GM12878 (cell line): ENCODE measurements at regions of chr5 and their contacts with region 1.

Region 1: GRCh38 chr5:157283434-157283833 is 17.5 kb downstream of the CYFIP2 start:
- DNase-seq: peak; percentile 65
- ATAC-seq: peak; percentile 99
- H3K4me3 ChIP-seq: no peak overlapping the region
- H3K27ac ChIP-seq: no peak overlapping the region
- H3K4me1 ChIP-seq: peaks cover 21% of the 10 kb centered on the region
- H3K27me3 ChIP-seq: no peaks in the 10 kb centered on the region
- CTCF ChIP-seq: no peak
- EP300 ChIP-seq: no peak
- POLR2A ChIP-seq: no peak
- RAD21 ChIP-seq: no peak

Region 2: GRCh38 chr5:157265714-157266285 is 17.6 kb before region 1 on chr5 and contains the start of gene CYFIP2:
- CTCF ChIA-PET with region 1: interaction called, 3 read pairs
- POLR2A ChIA-PET with region 1: interaction called, 8 read pairs
- RAD21 ChIA-PET with region 1: interaction called, 10 read pairs
- SMC1A ChIA-PET with region 1: interaction called, 16 read pairs
- in situ Hi-C with region 1: no loop called
- intact Hi-C with region 1: no loop called
- DNase-seq: no peak
- ATAC-seq: peak; percentile 87
- H3K4me3 ChIP-seq: peak within 1 kb of the TSS; percentile 91
- H3K27ac ChIP-seq: peak within 1 kb of the TSS; percentile 83
- H3K4me1 ChIP-seq: peaks cover 37% of the 10 kb centered on the region
- H3K27me3 ChIP-seq: no peaks in the 10 kb centered on the region
- CTCF ChIP-seq: no peak
- EP300 ChIP-seq: no peak
- POLR2A ChIP-seq: peak; percentile 80
- RAD21 ChIP-seq: no peak
- polyA plus RNA-seq, gene CYFIP2: 43.4 to 68.6 TPM

Region 3: GRCh38 chr5:158492841-158493242 is 1209.4 kb after region 1 on chr5:
- CTCF ChIA-PET with region 1: no interaction called
- POLR2A ChIA-PET with region 1: no interaction called
- RAD21 ChIA-PET with region 1: no interaction called
- SMC1A ChIA-PET with region 1: no interaction called
- in situ Hi-C with region 1: no loop called
- intact Hi-C with region 1: loop called (anchors 10 kb)
- DNase-seq: no peak
- ATAC-seq: no peak
- H3K4me3 ChIP-seq: no peak overlapping the region
- H3K27ac ChIP-seq: no peak overlapping the region
- H3K4me1 ChIP-seq: no peaks in the 10 kb centered on the region
- H3K27me3 ChIP-seq: no peaks in the 10 kb centered on the region
- CTCF ChIP-seq: no peak
- EP300 ChIP-seq: no peak
- POLR2A ChIP-seq: no peak
- RAD21 ChIP-seq: no peak